GM13976 (cell line): ENCODE measurements at regions of chr6 and their contacts with region 1.

Region 1: GRCh38 chr6:24855395-24856245 is 56.9 kb upstream of the ARMH2 start:
- DNase-seq: peak; percentile 73
- CTCF ChIP-seq: peak; percentile 82

Region 2: DNA sequence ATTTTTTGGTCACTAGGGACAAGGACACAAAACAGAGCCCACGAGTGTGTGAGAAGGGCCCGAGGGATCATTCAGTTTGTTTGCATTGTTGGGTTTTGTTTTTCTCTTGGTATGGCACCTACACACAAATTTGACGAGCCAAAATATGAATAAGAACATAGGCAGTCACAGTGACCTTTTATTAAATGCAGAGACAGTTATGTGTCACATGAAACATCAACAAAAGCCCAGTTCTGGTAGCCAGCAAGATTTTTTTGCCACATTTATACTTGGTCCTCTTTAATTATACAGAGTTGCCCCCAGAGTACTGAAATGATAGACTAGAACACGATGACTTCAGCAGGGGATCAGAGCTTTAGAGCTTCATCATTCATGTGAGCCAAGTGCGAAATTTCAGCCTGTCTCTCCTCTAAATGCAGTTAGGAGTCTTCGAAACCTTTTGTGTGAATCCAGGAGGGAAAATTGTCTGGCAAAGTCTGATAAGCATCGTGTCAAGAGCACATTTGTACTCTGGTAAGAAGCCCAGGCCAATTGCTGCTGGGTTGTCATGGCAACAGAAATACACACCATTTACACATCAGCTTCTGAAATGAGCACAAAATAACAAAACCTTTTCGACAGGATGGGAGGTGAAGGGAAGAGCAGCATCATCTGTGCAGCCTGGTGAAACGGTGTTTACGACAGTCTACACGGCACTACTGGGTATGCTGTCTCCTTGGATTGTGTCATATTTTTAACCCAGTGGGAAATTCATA is 159.4 kb after region 1 on chr6:
- in situ Hi-C with region 1: loop called (anchors 5 kb)
- DNase-seq: no peak
- CTCF ChIP-seq: no peak

Region 3: DNA sequence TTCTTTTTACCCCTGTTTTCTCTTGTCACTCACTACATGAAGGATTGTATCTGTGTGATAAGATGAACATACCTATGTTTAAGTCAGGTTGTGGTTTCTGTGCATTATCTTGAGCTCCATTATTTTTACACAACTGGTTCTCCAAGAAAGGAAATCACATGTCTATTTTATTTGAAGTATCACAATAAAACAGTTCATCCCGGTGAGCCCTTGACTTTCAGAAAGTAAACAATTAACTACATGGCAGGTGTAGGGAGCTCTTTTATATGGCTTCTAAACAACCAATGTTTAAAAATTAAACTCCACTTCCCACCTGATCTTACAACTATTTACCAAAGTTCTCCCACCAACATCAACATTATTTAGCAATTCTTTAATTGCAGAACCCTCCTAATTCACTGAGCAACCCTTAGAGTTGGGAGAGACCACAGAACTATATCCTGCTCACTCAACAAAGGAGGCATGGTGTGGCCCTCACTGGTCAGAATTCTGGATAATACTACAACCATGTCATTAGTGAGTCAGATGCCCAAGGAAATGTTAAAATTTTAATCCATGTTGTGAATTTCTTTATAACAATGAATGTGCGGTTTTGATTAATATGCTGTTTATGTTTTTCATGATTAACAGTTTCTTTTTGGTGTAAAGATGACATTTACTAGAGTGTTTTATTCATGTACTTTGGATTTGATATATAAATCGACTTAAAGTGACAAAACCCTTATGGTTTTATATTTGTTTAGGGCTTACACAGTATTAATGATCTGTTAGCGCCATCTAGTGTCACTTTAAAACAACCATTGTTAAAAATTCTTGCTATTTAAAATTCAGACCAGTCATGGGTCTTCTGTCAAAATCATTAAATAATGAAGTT is 746.4 kb after region 1 on chr6:
- in situ Hi-C with region 1: loop called (anchors 25 kb)
- DNase-seq: peak; percentile 39
- CTCF ChIP-seq: peak; percentile 10